IMR-90 (cell line): ENCODE measurements at regions of chr21 and their contacts with region 1.

Region 1: GRCh38 chr21:39016740-39017315 is 166.4 kb downstream of the PSMG1 start:
- DNase-seq: peak; percentile 40
- ATAC-seq: no peak
- H3K4me3 ChIP-seq: no peak overlapping the region
- H3K27ac ChIP-seq: peak overlapping the region; percentile 21; the same call in 1 of the 2 replicates
- H3K4me1 ChIP-seq: peaks cover 29% of the 10 kb centered on the region
- H3K27me3 ChIP-seq: no peaks in the 10 kb centered on the region
- CTCF ChIP-seq: no peak
- POLR2A ChIP-seq: no peak
- RAD21 ChIP-seq: no peak

Region 2: GRCh38 chr21:38297194-38297631 is 719.6 kb before region 1 on chr21:
- CTCF ChIA-PET with region 1: no interaction called
- POLR2A ChIA-PET with region 1: no interaction called
- dilution Hi-C with region 1: no loop called
- in situ Hi-C with region 1: no loop called
- intact Hi-C with region 1: loop called (anchors 5 kb)
- DNase-seq: peak; percentile 78
- ATAC-seq: peak; percentile 79
- H3K4me3 ChIP-seq: no peak overlapping the region
- H3K27ac ChIP-seq: peak overlapping the region; percentile 70
- H3K4me1 ChIP-seq: peaks cover 19% of the 10 kb centered on the region
- H3K27me3 ChIP-seq: no peaks in the 10 kb centered on the region
- CTCF ChIP-seq: no peak
- POLR2A ChIP-seq: no peak
- RAD21 ChIP-seq: no peak

Region 3: GRCh38 chr21:38751379-38752050 is 265.3 kb before region 1 on chr21:
- CTCF ChIA-PET with region 1: no interaction called
- POLR2A ChIA-PET with region 1: no interaction called
- dilution Hi-C with region 1: no loop called
- in situ Hi-C with region 1: no loop called
- intact Hi-C with region 1: no loop called
- DNase-seq: no peak
- ATAC-seq: no peak
- H3K4me3 ChIP-seq: no peak overlapping the region
- H3K27ac ChIP-seq: no peak overlapping the region
- H3K4me1 ChIP-seq: peaks cover 2% of the 10 kb centered on the region; the same call in 1 of the 2 replicates
- H3K27me3 ChIP-seq: no peaks in the 10 kb centered on the region
- CTCF ChIP-seq: no peak
- POLR2A ChIP-seq: no peak
- RAD21 ChIP-seq: no peak